ENCODE measurements at regions of chr3 and their contacts with region 1.

Region 1: GRCh38 chr3:94173676-94174434 is 111.0 kb downstream of the NSUN3 start:
- DNase-seq: peak; percentile 64
- H3K4me3 ChIP-seq: no peak overlapping the region
- H3K27ac ChIP-seq: no peak overlapping the region
- H3K4me1 ChIP-seq: peaks cover 24% of the 10 kb centered on the region
- H3K27me3 ChIP-seq: no peaks in the 10 kb centered on the region
- CTCF ChIP-seq: no peak

Region 2: GRCh38 chr3:94127115-94127514 is 46.7 kb before region 1 on chr3:
- CTCF ChIA-PET with region 1: no interaction called
- POLR2A ChIA-PET with region 1: no interaction called
- intact Hi-C with region 1: loop called (anchors 10 kb)
- DNase-seq: no peak
- H3K4me3 ChIP-seq: no peak overlapping the region
- H3K27ac ChIP-seq: no peak overlapping the region
- H3K4me1 ChIP-seq: peaks cover 9% of the 10 kb centered on the region
- H3K27me3 ChIP-seq: no peaks in the 10 kb centered on the region
- CTCF ChIP-seq: no peak